MCF 10A (cell line): ENCODE measurements at regions of chr6 and their contacts with region 1.

Region 1: GRCh38 chr6:5053038-5053437 is 32.1 kb upstream of the PPP1R3G start:
- DNase-seq: no peak
- H3K4me3 Mint-ChIP-seq: no peak overlapping the region
- H3K27ac Mint-ChIP-seq: no peak overlapping the region
- H3K4me1 Mint-ChIP-seq: peaks cover 6% of the 10 kb centered on the region
- H3K27me3 Mint-ChIP-seq: no peaks in the 10 kb centered on the region
- CTCF ChIP-seq: no peak

Region 2: GRCh38 chr6:5379647-5380242 is 326.7 kb after region 1 on chr6:
- CTCF ChIA-PET with region 1: no interaction called
- POLR2A ChIA-PET with region 1: no interaction called
- intact Hi-C with region 1: loop called (anchors 10 kb)
- DNase-seq: peak; percentile 63
- H3K4me3 Mint-ChIP-seq: no peak overlapping the region
- H3K27ac Mint-ChIP-seq: no peak overlapping the region
- H3K4me1 Mint-ChIP-seq: no peaks in the 10 kb centered on the region
- H3K27me3 Mint-ChIP-seq: no peaks in the 10 kb centered on the region
- CTCF ChIP-seq: peak; percentile 43